A549 (cell line): ENCODE measurements at regions of chr11 and their contacts with region 1.

Region 1: DNA sequence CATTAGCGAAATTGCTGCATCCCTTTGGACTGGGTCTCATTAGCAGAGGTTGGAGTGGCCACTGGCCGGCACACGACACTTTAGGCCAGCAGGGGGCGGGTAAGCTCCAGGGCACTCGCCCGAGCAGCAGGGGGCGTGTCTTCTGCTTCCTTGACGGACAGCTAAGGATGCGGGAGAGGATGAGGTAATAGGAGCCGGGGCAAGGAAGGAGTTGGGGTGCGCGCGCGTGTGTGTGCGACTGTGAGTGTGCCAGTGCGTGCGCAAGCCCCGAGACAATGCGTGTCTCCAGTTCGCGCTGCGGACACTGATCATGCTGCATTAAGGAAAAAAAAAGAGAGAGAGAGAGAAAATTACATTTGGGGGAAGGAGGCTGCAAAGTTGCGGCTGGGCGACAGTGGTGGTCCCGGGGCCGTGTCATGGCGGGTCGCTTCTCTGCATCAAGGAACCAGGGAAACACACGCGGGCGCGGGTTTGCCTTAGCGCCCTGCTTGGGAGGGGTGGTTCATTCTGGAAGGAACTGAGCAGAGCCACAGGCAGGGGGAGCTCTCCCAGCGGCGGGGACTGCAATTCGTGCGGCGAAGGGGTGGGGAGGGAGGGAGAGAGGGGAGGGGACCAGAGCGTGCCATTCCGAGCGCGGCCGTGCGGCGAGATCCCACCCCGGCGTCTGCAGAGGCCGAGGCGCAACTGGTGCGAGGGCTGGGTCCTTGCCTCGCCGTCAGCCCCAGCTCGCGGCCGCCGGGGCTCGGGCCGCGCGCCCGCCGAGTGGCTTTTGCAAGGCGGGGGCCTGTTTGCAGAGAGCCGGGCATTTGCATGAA is at the start of gene DTX4:
- DNase-seq: peak; percentile 85 to 90
- ATAC-seq: peak; percentile 87 to 94
- H3K4me3 ChIP-seq: peak within 1 kb of the TSS; percentile 80
- H3K27ac ChIP-seq: peak within 1 kb of the TSS; percentile 75 to 93
- H3K4me1 ChIP-seq: peaks cover 26% of the 10 kb centered on the region
- CTCF ChIP-seq: peak; percentile 36
- EP300 ChIP-seq: no peak
- POLR2A ChIP-seq: peak; percentile 50
- RAD21 ChIP-seq: peak; percentile 83 to 90
- polyA plus RNA-seq, gene DTX4: 0.97 and 2.2 TPM in 2 replicates

Region 2: GRCh38 chr11:59112494-59112893 is 59.2 kb before region 1 on chr11:
- CTCF ChIA-PET with region 1: no interaction called
- POLR2A ChIA-PET with region 1: no interaction called
- DNase-seq: no peak
- ATAC-seq: no peak
- H3K4me3 ChIP-seq: no peak overlapping the region
- H3K27ac ChIP-seq: no peak overlapping the region
- H3K4me1 ChIP-seq: peaks cover 9% of the 10 kb centered on the region
- CTCF ChIP-seq: no peak
- EP300 ChIP-seq: no peak
- POLR2A ChIP-seq: no peak
- RAD21 ChIP-seq: no peak

Region 3: GRCh38 chr11:59152312-59152951 is 19.3 kb before region 1 on chr11:
- CTCF ChIA-PET with region 1: interaction called, 56 read pairs
- POLR2A ChIA-PET with region 1: no interaction called
- DNase-seq: no peak
- ATAC-seq: no peak
- H3K4me3 ChIP-seq: no peak overlapping the region
- H3K27ac ChIP-seq: no peak overlapping the region
- H3K4me1 ChIP-seq: no peaks in the 10 kb centered on the region
- CTCF ChIP-seq: no peak
- EP300 ChIP-seq: no peak
- POLR2A ChIP-seq: no peak
- RAD21 ChIP-seq: no peak

Region 4: DNA sequence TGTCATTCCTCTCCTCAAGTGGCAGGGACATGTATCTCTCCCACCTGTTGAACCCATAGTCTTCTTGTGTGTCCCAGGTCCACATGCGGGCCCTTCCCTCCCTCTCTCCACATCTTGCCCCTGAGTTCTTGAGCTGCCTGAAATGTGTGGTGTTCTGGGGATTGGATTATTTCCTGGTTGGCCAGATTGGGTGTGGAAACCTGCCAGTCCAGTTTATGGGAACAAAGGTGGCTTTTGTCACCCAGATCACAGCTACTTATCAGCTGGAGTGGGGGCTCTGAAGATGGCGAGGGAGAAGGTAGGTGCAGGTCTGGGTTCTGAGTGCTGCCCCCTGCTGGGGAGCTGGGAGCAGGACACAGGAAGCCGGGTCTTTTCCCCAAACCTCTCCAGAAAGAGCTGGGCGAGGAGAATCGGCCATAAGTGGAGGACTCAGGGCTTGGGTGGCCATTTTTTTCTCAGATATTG is 14.4 kb after region 1 on chr11:
- CTCF ChIA-PET with region 1: interaction called, 40 read pairs
- POLR2A ChIA-PET with region 1: no interaction called
- DNase-seq: peak; percentile 24 to 41
- ATAC-seq: peak in 1 of 2 experiments; percentile 87; a peak in 3 of 6 replicates
- H3K4me3 ChIP-seq: no peak overlapping the region
- H3K27ac ChIP-seq: no peak overlapping the region
- H3K4me1 ChIP-seq: peaks cover 5% of the 10 kb centered on the region; the same call in 1 of the 3 replicates
- CTCF ChIP-seq: peak; percentile 33; the same call in 2 of the 3 replicates
- EP300 ChIP-seq: no peak
- POLR2A ChIP-seq: no peak
- RAD21 ChIP-seq: no peak

Region 5: GRCh38 chr11:59197991-59198390 is 26.3 kb after region 1 on chr11:
- CTCF ChIA-PET with region 1: interaction called, 161 read pairs
- POLR2A ChIA-PET with region 1: interaction called, 5 read pairs
- DNase-seq: no peak
- ATAC-seq: no peak
- H3K4me3 ChIP-seq: no peak overlapping the region
- H3K27ac ChIP-seq: no peak overlapping the region
- H3K4me1 ChIP-seq: no peaks in the 10 kb centered on the region
- CTCF ChIP-seq: no peak
- EP300 ChIP-seq: no peak
- POLR2A ChIP-seq: no peak
- RAD21 ChIP-seq: no peak

Region 6: DNA sequence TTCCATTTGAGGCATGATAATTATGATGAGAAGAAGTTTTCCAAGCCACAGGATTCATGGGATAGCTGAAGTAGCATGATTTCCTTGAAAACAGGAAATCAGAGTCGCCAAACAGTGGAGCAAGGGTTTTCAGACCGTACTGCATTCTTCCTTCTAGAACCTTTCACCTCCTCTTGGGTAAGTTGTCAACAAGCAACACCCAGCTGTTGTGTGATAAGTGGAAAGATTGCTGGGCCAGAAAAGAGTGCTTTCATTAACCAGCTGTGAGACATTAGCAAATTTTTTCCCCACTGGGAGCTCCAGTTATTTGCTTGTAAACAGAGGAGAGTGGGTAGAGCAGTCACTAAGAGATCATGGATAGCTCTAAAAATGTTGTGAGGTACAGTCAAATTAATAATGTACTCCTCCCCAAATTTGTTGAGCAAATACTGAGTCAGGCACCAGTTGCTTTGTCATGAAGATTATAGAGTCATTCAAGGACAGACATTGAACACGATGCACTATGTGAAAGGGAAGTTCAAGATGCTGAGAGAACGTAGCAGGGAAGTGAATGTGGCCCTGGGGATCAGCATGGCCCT is 52.7 kb after region 1 on chr11:
- CTCF ChIA-PET with region 1: interaction called, 33 read pairs
- POLR2A ChIA-PET with region 1: no interaction called
- DNase-seq: no peak
- ATAC-seq: no peak; a peak in 2 of 6 replicates
- H3K4me3 ChIP-seq: no peak overlapping the region
- H3K27ac ChIP-seq: no peak overlapping the region
- H3K4me1 ChIP-seq: peaks cover 18% of the 10 kb centered on the region
- CTCF ChIP-seq: no peak
- EP300 ChIP-seq: no peak
- POLR2A ChIP-seq: no peak
- RAD21 ChIP-seq: no peak

Region 7: DNA sequence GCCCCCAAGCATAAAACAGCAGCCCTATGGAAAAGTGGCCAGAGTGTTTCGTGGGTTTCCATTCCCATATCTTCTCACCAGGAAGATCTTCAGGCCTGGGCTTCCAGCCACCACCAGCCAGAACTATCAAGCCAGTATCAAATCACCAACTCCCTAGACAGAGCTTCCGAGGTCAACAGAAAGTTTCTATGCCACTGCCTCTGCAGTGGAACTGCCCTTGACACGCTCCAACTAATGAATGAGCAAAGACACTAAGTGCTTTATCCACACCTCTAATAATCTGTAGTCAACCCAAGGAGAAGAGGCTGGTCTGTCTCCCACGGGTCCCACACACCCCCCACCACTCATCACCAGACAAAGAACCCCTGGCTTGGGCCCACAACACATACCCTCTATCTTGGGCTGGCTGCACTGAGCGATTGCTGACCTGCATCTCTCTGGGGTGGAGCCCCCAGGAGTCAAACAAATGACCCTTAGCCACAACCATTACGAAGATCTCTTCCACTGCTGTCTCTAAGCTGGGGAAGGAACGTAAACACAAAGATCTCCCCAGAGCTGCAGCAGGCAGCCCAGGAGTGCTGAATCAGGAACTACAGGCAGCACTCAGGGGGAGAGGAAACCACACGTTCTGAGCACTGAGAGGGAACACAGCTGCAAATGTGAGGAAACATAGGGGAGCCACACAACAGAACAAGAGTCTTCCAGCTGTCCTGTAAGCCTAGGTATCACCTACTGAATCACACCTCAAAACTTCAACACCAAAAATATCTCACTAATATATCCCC is 196.7 kb after region 1 on chr11:
- CTCF ChIA-PET with region 1: no interaction called
- POLR2A ChIA-PET with region 1: no interaction called
- DNase-seq: no peak
- ATAC-seq: no peak
- H3K4me3 ChIP-seq: no peak overlapping the region
- H3K27ac ChIP-seq: no peak overlapping the region
- H3K4me1 ChIP-seq: no peaks in the 10 kb centered on the region
- CTCF ChIP-seq: no peak
- EP300 ChIP-seq: no peak
- POLR2A ChIP-seq: no peak
- RAD21 ChIP-seq: no peak

Region 8: DNA sequence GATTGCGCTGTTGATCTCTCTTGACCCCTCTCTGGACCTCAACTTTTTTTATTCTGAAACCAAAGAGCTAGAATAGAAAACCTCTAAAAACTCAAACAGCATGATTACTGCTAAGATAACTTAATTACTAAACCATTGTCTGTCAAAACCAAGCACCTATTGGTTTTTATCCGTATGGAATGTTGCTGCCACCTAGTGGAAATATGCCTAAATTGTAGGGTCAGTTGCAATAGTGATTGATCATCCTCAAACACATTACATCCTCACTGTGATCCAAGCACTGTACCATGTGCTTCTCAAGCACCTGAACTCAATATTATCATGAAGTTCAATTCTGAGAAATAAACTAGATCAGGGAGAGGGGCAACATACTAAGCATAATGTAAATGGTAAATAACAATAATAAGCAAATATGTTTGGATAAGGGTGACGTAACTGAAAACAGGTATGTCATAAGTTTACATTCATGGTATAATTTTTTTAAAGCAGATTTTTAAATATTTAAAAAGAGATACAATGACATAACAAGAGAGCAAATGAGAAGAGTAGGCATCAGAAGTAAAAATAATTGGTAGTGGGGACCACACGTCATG is 258.3 kb after region 1 on chr11:
- CTCF ChIA-PET with region 1: interaction called, 21 read pairs
- POLR2A ChIA-PET with region 1: no interaction called
- DNase-seq: peak; percentile 29 to 50
- ATAC-seq: peak in 1 of 2 experiments; percentile 81; a peak in 4 of 6 replicates
- H3K4me3 ChIP-seq: no peak overlapping the region
- H3K27ac ChIP-seq: no peak overlapping the region
- H3K4me1 ChIP-seq: no peaks in the 10 kb centered on the region
- CTCF ChIP-seq: peak; percentile 86
- EP300 ChIP-seq: no peak
- POLR2A ChIP-seq: no peak
- RAD21 ChIP-seq: peak; percentile 70